ENCODE measurements at regions of chrX and their contacts with region 1.

Region 1: GRCh38 chrX:23861215-23861896 is 46.4 kb downstream of the APOO start:
- DNase-seq: no peak
- ATAC-seq: no peak
- H3K4me3 ChIP-seq: no peak overlapping the region
- H3K27ac ChIP-seq: no peak overlapping the region
- H3K4me1 ChIP-seq: no peaks in the 10 kb centered on the region
- H3K27me3 ChIP-seq: no peaks in the 10 kb centered on the region
- CTCF ChIP-seq: no peak

Region 2: GRCh38 chrX:23327104-23327503 is 534.3 kb before region 1 on chrX:
- CTCF ChIA-PET with region 1: no interaction called
- POLR2A ChIA-PET with region 1: no interaction called
- in situ Hi-C with region 1: no loop called
- intact Hi-C with region 1: no loop called
- DNase-seq: no peak
- ATAC-seq: no peak
- H3K4me3 ChIP-seq: no peak overlapping the region
- H3K27ac ChIP-seq: no peak overlapping the region
- H3K4me1 ChIP-seq: no peaks in the 10 kb centered on the region
- H3K27me3 ChIP-seq: no peaks in the 10 kb centered on the region
- CTCF ChIP-seq: no peak

Region 3: GRCh38 chrX:23871905-23872546 is 10.7 kb after region 1 on chrX:
- CTCF ChIA-PET with region 1: no interaction called
- POLR2A ChIA-PET with region 1: interaction called, 15 read pairs
- in situ Hi-C with region 1: no loop called
- intact Hi-C with region 1: no loop called
- DNase-seq: no peak
- ATAC-seq: no peak
- H3K4me3 ChIP-seq: no peak overlapping the region
- H3K27ac ChIP-seq: no peak overlapping the region
- H3K4me1 ChIP-seq: no peaks in the 10 kb centered on the region
- H3K27me3 ChIP-seq: no peaks in the 10 kb centered on the region
- CTCF ChIP-seq: no peak